Ascending aorta (tissue), 2 donors: ENCODE measurements at regions of chr7 and their contacts with region 1.

Region 1: GRCh38 chr7:137992550-137993394 is 9.1 kb downstream of the CREB3L2 start:
- DNase-seq: peak in 1 of 2 donors; percentile 83
- H3K4me3 ChIP-seq: peak overlapping the region in 1 of 2 donors; percentile 35
- H3K27ac ChIP-seq: peak overlapping the region; percentile 83 to 91
- H3K4me1 ChIP-seq: peaks cover 37 to 74% of the 10 kb centered on the region in 2 donors
- H3K27me3 ChIP-seq: no peaks in the 10 kb centered on the region
- CTCF ChIP-seq: no peak

Region 2: GRCh38 chr7:137933270-137934017 is 59.3 kb before region 1 on chr7:
- intact Hi-C with region 1: loop called (anchors 2 kb)
- DNase-seq: peak in 1 of 2 donors; percentile 86
- H3K4me3 ChIP-seq: peak overlapping the region in 1 of 2 donors; percentile 11
- H3K27ac ChIP-seq: peak overlapping the region; percentile 77 to 79
- H3K4me1 ChIP-seq: peaks cover 13 to 62% of the 10 kb centered on the region in 2 donors
- H3K27me3 ChIP-seq: no peaks in the 10 kb centered on the region
- CTCF ChIP-seq: no peak

Region 3: DNA sequence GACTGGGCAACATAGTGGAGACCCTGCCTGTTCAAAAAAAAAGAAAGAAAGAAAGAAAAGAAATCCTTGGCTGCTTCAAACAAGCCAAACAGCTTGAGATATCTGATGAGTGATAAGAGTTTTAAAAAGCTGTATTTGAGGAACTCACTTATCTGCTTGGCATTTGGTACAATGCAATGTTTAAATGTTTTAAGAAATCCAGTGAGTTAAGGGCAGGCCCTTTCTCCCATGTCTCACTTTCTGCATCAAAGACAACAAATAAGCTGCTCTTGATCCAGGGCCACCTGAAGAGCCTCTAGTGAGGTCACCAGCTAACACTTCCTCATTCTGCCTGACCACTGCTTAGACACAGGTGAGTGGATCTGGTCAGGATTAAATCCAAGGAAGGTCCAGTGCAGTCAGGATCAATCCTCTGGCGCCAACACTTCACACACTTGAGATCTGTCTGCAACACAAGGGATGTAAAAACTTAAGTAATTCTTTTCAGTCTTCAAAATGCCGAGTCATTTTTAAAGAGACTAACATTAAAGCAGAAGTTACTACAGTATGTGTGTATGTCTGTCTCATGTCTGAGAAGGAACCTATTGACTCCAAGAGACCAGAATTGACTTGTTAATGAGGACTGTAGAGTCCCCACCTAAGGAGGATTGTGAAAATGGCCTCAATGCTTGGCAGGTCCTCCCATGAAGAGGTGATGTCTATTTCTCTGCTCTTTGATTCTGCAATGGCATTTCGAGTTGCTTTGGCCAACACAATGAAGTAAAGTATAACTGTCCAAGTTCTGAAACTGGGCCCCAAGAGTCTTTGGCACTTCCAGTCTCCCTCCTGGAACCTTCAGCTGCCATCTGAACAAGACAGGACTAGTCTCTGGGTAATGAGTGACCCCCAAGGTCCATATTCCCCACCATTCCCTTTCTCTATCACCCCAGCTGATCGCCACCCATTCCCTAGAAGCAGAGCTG is 34.0 kb before region 1 on chr7:
- intact Hi-C with region 1: loop called (anchors 5 kb)
- DNase-seq: no peak
- H3K4me3 ChIP-seq: no peak overlapping the region
- H3K27ac ChIP-seq: peak overlapping the region; percentile 78 to 79
- H3K4me1 ChIP-seq: peaks cover 7 to 50% of the 10 kb centered on the region in 2 donors
- H3K27me3 ChIP-seq: no peaks in the 10 kb centered on the region
- CTCF ChIP-seq: no peak

Region 4: DNA sequence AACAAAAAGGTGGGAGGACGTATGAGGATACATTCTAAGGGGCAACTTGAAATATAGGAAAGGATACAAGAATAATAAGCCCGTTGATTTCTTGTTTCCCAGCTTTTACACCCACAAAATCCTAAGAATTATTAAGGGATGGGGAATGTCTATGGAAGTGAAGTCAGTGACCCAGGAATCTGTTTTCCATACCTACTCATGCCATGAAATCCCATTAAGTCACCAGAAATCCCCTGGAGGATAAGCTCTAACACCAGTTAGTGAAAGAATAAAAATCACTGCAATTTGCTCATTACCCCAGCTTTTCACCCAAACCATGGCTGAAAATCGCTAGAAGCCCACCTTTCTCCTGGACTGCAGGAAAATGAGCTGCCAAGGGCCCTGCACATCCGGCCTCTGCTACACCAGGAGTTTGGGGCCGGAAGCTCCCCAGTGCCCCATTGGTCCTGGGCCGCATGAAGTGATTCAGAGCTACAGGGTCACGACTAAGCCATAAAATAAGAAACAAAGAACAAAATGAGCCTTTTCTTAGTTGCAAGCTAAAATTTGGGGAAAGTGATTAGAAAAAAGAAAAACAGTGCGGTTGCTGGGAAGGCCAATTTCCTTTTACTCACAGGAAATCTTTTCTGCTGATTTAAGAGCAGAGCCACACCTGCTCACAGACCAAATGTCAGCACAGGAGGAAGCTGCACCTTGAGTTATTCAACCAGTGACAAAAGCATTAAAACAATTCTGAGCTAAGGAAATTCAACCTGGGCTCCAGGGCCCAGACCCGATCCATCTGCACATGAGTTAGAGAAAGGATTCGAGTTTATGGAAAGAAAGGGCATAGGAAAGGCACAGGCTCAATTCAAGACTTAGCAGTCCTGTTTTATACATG is 1744.7 kb after region 1 on chr7:
- intact Hi-C with region 1: loop called (anchors 5 kb)
- DNase-seq: no peak
- H3K4me3 ChIP-seq: no peak overlapping the region
- H3K27ac ChIP-seq: peak overlapping the region; percentile 82 to 96
- H3K4me1 ChIP-seq: peaks cover 35 to 77% of the 10 kb centered on the region in 2 donors
- H3K27me3 ChIP-seq: no peaks in the 10 kb centered on the region
- CTCF ChIP-seq: no peak